ENCODE measurements at regions of chr11 and their contacts with region 1.

Region 1: DNA sequence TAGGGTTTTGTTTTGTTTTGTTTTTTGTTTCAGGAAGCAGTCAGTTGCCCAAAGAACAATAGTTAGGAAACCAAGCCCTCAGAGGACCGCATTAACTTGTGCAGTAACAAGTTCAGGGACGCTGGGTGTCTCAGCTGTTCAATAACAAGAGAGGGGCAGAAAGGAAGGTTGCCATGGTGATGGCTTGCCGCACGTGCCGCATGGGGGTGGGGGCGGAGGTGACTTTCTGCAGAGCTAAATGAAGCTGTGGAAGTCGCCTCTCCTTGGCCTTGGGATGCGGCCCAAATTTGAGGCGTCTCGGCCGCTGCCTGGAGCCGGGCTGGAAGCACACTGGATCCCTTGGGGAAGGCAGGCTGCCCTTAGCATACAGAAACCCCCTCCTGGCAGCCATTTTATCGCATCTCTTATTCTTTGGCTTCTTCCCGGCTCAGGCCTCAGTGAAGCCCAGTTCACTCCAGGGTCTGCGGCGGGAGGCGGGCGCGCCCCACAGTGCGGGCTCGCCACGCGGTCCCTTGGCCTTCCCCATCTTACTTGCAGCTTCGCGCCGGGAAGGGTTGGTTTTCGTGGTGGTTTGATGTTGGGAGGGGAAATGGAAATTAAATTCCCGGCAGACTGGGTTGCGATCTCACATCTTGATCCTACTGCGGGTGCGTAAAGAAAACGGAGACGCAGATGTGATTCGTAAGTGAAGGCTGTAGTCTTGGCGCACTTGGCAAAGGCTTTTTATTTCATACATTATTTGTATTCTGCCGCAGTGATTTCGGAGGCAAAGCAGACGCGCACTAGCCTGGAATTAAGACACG is 94.3 kb downstream of the SLC17A6 start:
- DNase-seq: peak; percentile 71 to 91 (median 88)
- H3K4me3 ChIP-seq: peak overlapping the region; percentile 14 to 69 (median 53)
- H3K27ac ChIP-seq: no peak overlapping the region
- H3K4me1 ChIP-seq: peaks cover 0 to 4% (median 3%) of the 10 kb centered on the region in 3 donors
- H3K27me3 ChIP-seq: no peaks in the 10 kb centered on the region
- CTCF ChIP-seq: no peak

Region 2: DNA sequence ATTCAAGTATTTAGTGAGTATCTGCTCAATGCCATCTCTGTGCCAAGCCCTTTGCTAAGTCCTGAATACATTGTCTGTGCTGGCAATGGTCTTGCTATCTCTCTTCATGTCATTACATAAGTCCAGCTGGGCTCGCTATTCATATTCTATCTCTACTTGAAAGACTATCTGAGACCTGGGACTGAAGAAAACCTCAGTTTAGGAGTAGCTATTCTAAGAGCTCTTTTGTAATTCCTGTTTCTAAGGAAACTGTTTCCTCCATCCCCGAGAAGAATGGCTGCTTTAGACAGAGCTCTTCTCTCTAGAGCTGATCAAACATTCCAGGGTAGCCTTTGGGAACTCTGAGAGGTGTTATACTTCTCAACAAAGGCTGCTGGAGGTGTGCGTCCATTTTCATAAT is 61.3 kb before region 1 on chr11:
- intact Hi-C with region 1: loop called (anchors 10 kb)
- DNase-seq: no peak
- H3K4me3 ChIP-seq: no peak overlapping the region
- H3K27ac ChIP-seq: no peak overlapping the region
- H3K4me1 ChIP-seq: no peaks in the 10 kb centered on the region
- H3K27me3 ChIP-seq: no peaks in the 10 kb centered on the region
- CTCF ChIP-seq: no peak